ENCODE measurements at regions of chr15 and their contacts with region 1.

Region 1: DNA sequence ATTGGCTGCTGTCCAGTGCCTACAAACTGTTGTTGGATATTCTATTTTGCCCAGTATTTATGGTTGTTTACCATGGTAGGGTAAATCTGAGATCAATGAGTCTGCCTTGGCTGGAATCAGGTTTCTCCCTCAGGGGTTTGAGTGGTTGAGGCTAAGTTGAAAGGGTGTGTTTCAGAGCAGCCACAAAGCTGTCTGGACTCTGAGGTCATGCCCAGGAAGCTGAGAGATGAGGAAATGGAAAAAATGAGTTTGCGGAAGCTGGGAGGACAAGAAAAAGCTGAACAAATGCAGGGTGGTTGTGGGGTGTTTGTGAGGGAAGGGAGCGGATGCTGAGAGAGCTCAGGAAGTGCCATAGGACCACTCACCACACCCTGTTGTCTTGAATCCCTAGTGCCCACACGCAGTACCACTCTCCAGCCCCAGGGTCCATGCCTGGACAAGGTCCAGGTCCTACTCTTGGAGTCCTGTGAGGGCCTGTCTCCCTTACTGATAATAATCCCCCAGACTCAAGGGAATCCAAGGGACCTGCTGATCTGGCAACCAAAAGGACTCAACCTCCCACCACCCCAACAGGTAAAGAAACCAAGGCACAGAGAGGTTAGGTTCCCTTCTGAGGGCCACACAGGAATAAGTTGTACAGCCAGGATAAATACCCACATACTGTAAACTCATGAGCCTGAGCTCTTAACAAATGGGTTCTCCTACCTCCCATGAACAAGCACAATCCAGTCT is 81.6 kb downstream of the PPCDC start:
- DNase-seq: peak; percentile 59
- H3K4me3 Mint-ChIP-seq: no peak overlapping the region
- H3K27ac Mint-ChIP-seq: peak overlapping the region; percentile 84
- H3K4me1 Mint-ChIP-seq: peaks cover 43% of the 10 kb centered on the region
- H3K27me3 Mint-ChIP-seq: no peaks in the 10 kb centered on the region

Region 2: DNA sequence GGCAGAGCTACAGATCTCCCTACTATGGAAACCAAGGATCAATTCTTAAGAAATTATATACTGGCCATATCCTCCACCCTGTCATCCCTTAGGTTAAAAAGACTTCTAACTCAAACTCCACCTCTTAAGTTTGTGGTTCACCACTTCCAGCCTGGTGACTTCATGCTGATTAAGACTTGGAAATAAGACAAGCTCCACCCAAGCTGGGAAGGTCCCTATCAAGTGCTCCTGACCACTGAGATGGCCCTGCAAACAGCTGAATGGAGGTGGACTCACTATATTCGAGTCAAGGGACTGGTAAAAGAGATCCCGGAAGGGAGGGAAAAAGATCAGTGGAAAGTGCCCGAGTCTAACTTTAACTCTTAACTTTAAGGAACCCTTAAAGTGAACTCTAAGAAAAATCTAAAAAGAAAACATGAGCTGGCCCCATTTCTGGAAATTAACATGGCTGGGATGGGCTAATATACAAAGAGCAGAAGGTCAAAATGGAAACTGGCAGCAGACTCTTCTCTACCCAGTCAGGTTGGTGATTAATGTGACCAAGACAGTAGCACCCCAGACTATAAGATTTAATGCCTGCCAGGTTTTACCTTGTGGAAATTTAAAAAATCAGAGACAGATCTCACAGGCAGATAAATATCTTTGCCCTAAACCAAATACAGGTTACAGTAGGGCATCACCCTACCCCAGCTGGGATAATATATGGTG is 37.7 kb before region 1 on chr15:
- intact Hi-C with region 1: loop called (anchors 1 kb)
- DNase-seq: peak; percentile 72
- H3K4me3 Mint-ChIP-seq: peak overlapping the region; percentile 70
- H3K27ac Mint-ChIP-seq: peak overlapping the region; percentile 97
- H3K4me1 Mint-ChIP-seq: peaks cover 79% of the 10 kb centered on the region
- H3K27me3 Mint-ChIP-seq: no peaks in the 10 kb centered on the region

Region 3: DNA sequence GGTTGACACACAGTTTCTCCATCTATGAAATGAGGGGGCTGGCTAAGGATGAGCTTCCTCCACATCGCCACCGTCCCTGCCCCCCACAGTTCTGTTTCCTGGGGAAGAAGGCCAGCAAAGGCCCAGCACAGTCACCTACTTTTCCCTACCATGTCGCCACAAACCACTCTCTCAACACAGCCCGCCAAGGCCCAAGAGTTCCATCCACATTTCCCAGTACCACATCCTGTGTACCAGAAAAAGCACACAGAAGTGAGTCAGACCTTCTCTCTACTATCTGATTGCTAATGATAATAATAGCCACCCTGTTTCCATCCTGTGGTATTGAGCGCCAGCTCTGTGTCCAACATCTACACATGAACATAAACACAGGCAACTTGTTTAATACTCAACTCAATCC is 66.4 kb after region 1 on chr15:
- intact Hi-C with region 1: loop called (anchors 1 kb)
- DNase-seq: peak; percentile 55
- H3K4me3 Mint-ChIP-seq: peak overlapping the region; percentile 1
- H3K27ac Mint-ChIP-seq: peak overlapping the region; percentile 72
- H3K4me1 Mint-ChIP-seq: peaks cover 60% of the 10 kb centered on the region
- H3K27me3 Mint-ChIP-seq: no peaks in the 10 kb centered on the region